Mammary epithelial cell (primary cell): ENCODE measurements at regions of chr1 and their contacts with region 1.

Region 1: GRCh38 chr1:28642847-28643635 is at the start of gene TAF12:
- DNase-seq: peak; percentile 97
- H3K4me3 ChIP-seq: peak within 1 kb of the TSS; percentile 52 to 72 (median 70)
- H3K27ac ChIP-seq: peak within 1 kb of the TSS; percentile 79
- H3K4me1 ChIP-seq: peaks cover 15% of the 10 kb centered on the region
- H3K27me3 ChIP-seq: no peaks in the 10 kb centered on the region
- CTCF ChIP-seq: peak in 1 of 2 donors; percentile 55
- total RNA-seq, gene TAF12: 22.0 to 27.1 TPM

Region 2: DNA sequence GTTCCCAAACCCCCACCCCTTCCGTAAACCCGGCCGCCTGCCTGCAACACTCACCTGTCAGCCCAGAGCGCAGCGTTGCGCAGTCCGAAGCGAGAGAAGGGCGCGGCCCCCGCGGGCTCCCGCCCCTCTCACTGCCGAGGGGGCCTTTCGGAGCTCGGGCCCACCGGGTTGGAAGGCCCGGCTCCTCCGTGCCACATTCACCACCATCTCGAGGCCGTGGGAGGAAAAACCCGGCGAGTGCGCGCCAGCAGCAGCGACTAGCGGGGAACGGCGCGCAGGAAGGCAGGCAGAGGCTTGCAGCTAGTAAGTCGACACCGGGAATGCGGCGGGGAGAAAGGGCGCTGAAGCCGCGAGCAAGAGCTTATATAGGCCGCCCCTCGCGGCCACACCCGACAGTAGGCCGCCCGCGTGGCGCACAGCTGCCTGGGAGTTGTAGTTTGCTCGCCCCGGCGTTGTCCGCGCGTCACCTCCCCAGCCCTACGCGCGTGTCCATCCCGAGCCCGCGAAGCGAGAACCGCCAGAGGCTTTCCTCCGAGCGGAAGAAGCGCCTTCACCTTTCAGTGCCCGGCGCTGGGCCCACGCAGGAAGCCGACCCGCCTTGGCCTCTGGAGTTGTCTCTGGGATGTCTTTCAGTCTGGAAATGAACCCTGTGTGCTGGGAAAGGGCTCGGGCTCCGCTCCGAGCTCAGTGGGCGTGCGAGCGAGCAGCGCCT is 61.3 kb before region 1 on chr1:
- CTCF ChIA-PET with region 1: no interaction called
- dilution Hi-C with region 1: loop called (anchors 5 kb)
- in situ Hi-C with region 1: no loop called
- intact Hi-C with region 1: loop called (anchors 1 kb)
- DNase-seq: peak; percentile 95
- H3K4me3 ChIP-seq: peak overlapping the region; percentile 73 to 96 (median 88)
- H3K27ac ChIP-seq: peak overlapping the region; percentile 87
- H3K4me1 ChIP-seq: peaks cover 23% of the 10 kb centered on the region
- H3K27me3 ChIP-seq: no peaks in the 10 kb centered on the region
- CTCF ChIP-seq: peak in 1 of 2 donors; percentile 2

Region 3: DNA sequence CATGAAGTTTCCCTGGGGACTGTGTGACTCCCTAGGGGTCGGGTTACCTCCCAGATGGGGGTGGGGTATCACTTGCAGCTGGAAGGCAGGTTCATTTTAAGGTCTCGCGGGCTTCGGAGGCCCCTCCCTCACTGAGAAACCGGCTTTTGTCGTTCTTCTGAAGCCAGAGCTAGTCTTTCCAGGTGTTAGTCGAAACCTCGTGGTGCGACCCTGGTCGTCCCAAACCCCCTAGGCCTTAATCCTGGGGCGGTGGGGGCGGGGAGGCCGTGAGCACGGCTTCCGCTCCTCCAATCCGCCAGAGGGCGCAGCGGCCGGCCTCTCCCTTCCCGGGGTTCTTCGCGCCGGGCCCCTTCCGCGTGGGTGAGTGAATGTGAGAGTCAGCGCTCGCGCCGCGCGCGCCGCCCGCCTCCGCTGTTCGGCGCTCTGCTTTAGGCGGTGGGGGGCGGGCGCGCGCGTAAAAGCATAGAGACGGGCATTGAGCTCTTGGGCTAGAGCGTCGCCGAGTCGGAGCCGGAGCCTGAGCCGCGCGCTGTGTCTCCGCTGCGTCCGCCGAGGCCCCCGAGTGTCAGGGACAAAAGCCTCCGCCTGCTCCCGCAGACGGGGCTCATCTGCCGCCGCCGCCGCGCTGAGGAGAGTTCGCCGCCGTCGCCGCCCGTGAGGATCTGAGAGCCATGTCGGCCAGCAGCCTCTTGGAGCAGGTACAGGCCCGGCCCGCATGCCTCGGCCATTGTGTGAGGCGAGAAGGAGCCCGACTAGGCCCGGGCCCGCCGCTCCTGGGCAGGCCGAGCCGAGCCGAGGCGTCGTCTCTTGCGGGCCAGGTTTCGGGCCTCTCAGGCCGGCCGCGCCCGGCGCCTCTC is 93.6 kb after region 1 on chr1 and contains the start of gene YTHDF2:
- CTCF ChIA-PET with region 1: interaction called, 16 read pairs
- dilution Hi-C with region 1: no loop called
- in situ Hi-C with region 1: no loop called
- intact Hi-C with region 1: loop called (anchors 1 kb)
- DNase-seq: peak; percentile 96
- H3K4me3 ChIP-seq: peak within 1 kb of the TSS; percentile 89 to 99 (median 92)
- H3K27ac ChIP-seq: peak within 1 kb of the TSS; percentile 81
- H3K4me1 ChIP-seq: peaks cover 25% of the 10 kb centered on the region
- H3K27me3 ChIP-seq: no peaks in the 10 kb centered on the region
- CTCF ChIP-seq: peak; percentile 66 to 92
- total RNA-seq, gene YTHDF2: 75.8 to 84.7 TPM

Region 4: GRCh38 chr1:28775121-28775944 is 132.3 kb after region 1 on chr1:
- CTCF ChIA-PET with region 1: interaction called, 22 read pairs
- dilution Hi-C with region 1: no loop called
- in situ Hi-C with region 1: no loop called
- intact Hi-C with region 1: no loop called
- DNase-seq: peak; percentile 68
- H3K4me3 ChIP-seq: peak overlapping the region; percentile 14 to 41 (median 38)
- H3K27ac ChIP-seq: no peak overlapping the region
- H3K4me1 ChIP-seq: peaks cover 6% of the 10 kb centered on the region
- H3K27me3 ChIP-seq: no peaks in the 10 kb centered on the region
- CTCF ChIP-seq: peak in 1 of 2 donors; percentile 11

Region 5: GRCh38 chr1:29033829-29034466 is 390.9 kb after region 1 on chr1:
- CTCF ChIA-PET with region 1: no interaction called
- dilution Hi-C with region 1: no loop called
- in situ Hi-C with region 1: no loop called
- intact Hi-C with region 1: loop called (anchors 10 kb)
- DNase-seq: peak; percentile 35
- H3K4me3 ChIP-seq: no peak overlapping the region
- H3K27ac ChIP-seq: no peak overlapping the region
- H3K4me1 ChIP-seq: no peaks in the 10 kb centered on the region
- H3K27me3 ChIP-seq: no peaks in the 10 kb centered on the region
- CTCF ChIP-seq: peak; percentile 58 to 65